ENCODE measurements at regions of chr5 and their contacts with region 1.

Region 1: DNA sequence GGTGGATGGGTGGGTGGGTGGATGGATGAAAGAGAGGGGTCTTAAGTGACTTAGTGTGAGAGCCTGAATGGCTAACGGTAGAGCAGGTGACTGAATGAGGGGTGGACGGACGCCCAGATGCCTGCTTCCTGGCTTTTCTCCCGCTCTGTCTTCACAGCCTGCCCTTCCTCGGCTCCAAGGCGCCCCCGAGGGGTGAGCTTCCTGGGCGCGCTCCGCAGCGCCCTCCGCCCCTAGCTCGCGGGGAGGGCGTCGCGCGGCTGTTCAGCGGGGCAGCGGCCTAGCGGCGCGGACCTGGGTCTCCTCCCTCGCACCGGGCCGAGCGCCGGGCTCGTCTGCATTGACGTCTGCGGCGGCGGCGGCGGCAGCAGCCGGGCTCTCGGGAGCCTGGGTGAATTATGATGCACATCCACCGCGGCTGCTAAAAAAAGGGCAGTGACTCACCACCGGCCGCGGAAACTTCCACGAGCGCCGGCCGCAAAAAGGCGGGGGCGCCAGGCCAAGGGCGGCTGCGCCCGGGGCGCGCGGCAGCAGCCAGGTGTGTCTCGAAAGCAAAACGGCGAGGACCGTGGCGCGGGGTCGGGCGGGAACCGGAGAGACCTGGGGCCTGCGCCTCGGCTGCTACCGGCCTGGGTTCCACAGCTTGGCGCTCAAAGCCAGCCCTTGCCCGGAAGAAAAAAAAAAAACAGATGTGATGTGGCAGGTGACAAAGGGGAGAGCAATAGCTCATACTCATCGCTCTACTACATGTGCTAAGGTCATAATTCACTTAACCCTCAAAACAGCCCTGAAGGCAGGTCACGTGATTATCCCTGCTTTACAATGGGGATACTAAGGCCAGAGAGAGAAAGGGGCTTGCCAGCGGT is 143.0 kb upstream of the ADRA1B start:
- DNase-seq: peak; percentile 46
- H3K4me3 ChIP-seq: peak overlapping the region; percentile 56
- H3K27ac ChIP-seq: peak overlapping the region; percentile 65
- H3K27me3 ChIP-seq: no peaks in the 10 kb centered on the region
- CTCF ChIP-seq: no peak

Region 2: DNA sequence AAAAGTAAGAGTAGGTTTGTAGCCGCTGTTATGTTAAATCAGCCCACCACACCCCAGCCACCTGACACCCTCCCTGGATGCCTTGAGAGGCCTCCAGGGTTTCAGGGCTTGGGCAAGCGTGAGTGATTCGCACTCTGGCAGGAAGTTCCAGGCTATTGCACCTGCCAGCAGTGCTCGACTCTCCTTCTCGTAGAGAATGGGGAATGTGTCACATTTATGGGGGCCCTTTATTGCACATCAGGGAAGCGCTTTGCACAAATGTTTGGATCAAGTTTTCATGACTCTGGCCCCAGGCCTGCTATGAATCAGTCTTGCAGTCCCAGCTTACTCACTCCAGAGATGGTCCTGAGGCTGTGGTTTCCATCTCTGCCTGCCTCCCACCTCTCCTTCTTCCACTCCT is 76.9 kb after region 1 on chr5:
- CTCF ChIA-PET with region 1: no interaction called
- POLR2A ChIA-PET with region 1: interaction called, 11 read pairs
- DNase-seq: peak; percentile 29
- H3K4me3 ChIP-seq: no peak overlapping the region
- H3K27ac ChIP-seq: no peak overlapping the region
- H3K27me3 ChIP-seq: no peaks in the 10 kb centered on the region
- CTCF ChIP-seq: no peak

Measured in AG04450 (cell line).